ENCODE measurements at regions of chr6 and their contacts with region 1.

Region 1: GRCh38 chr6:30730601-30731435 is 10.7 kb downstream of the TUBB start:
- DNase-seq: peak; percentile 90
- H3K4me3 Mint-ChIP-seq: peak overlapping the region; percentile 35
- H3K27ac Mint-ChIP-seq: peak overlapping the region; percentile 55
- H3K4me1 Mint-ChIP-seq: peaks cover 44% of the 10 kb centered on the region
- H3K27me3 Mint-ChIP-seq: no peaks in the 10 kb centered on the region

Region 2: DNA sequence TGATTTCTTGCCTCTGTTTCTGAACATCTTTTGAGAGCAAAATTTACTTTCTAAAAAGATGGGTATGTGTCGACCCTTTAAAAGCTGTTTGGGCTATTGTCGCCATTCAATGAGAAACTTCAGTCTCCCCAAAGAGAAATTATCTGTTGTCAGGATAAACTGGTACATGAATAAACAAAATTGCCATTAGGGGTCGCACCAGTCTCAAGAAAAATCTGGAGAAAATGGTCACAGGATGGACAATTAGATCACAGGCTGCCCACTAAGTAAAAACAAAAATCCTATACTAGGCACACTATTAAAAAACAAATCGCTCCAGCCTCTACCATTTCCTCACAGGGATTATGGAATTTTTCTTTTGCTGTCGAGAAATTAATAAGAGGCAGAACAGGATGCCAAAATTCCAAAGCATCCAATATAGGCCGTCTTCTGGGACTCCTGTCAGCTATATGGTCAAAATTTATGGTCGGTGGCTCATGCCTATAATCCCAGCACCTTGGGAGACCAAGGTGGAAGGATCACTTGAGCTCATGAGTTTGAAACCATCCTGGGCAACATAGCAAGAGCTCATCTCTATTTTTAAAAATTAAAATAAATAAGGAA is 247.0 kb before region 1 on chr6:
- CTCF ChIA-PET with region 1: interaction called, 13 read pairs
- POLR2A ChIA-PET with region 1: interaction called, 4 read pairs
- DNase-seq: no peak
- H3K4me3 Mint-ChIP-seq: no peak overlapping the region
- H3K27ac Mint-ChIP-seq: no peak overlapping the region
- H3K4me1 Mint-ChIP-seq: peaks cover 35% of the 10 kb centered on the region
- H3K27me3 Mint-ChIP-seq: peaks cover 60% of the 10 kb centered on the region

Region 3: GRCh38 chr6:30600451-30600961 is 130.3 kb before region 1 on chr6:
- CTCF ChIA-PET with region 1: interaction called, 29 read pairs
- POLR2A ChIA-PET with region 1: interaction called, 6 read pairs
- DNase-seq: no peak
- H3K4me3 Mint-ChIP-seq: no peak overlapping the region
- H3K27ac Mint-ChIP-seq: no peak overlapping the region
- H3K4me1 Mint-ChIP-seq: peaks cover 22% of the 10 kb centered on the region
- H3K27me3 Mint-ChIP-seq: no peaks in the 10 kb centered on the region

Region 4: GRCh38 chr6:30646458-30647241 is 84.2 kb before region 1 on chr6 and contains the start of gene C6orf136:
- CTCF ChIA-PET with region 1: interaction called, 11 read pairs
- POLR2A ChIA-PET with region 1: interaction called, 4 read pairs
- DNase-seq: peak; percentile 94
- H3K4me3 Mint-ChIP-seq: peak within 1 kb of the TSS; percentile 83
- H3K27ac Mint-ChIP-seq: peak within 1 kb of the TSS; percentile 90
- H3K4me1 Mint-ChIP-seq: peaks cover 27% of the 10 kb centered on the region
- H3K27me3 Mint-ChIP-seq: no peaks in the 10 kb centered on the region
- total RNA-seq, gene C6orf136: 21.7 to 24.4 TPM

Region 5: DNA sequence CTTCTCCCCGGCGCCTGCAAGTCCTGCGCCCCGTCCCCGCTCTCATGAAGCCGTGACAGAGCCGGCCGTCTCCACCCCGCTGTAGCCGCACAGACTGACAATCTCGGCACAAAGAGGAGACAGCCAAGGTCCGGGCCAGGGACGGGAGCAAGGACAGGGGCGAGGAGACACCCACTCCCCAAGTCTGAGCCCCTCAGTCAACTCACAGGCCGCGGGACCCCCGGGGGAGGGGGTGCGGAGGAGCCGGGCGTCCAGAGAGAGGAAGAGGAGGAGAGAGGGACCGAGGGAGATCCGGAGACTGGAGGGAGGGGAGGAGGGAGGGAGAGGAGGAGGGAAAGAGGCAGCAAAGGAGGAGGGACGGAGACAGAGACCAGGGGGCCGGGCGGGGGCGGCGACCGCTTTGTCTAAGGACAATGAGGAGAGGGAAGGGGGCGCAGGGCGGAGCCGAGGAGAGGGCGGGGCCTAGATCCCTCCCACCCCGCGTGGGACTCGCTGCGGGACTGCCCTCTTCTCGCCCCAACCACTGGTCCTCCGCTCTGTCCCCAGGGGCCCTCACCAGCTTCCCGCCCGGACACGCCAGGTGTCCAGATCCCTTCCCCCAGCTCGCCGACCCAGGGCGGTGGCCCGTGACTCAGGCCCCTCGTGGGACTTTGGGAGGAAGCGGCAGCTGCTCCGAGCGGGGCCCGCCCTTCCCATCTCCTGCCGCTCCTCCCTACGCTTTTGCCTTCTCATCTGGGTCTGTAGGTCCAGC is 43.7 kb before region 1 on chr6:
- CTCF ChIA-PET with region 1: interaction called, 626 read pairs
- POLR2A ChIA-PET with region 1: interaction called, 561 read pairs
- DNase-seq: peak; percentile 85
- H3K4me3 Mint-ChIP-seq: peak overlapping the region; percentile 93
- H3K27ac Mint-ChIP-seq: peak overlapping the region; percentile 94
- H3K4me1 Mint-ChIP-seq: peaks cover 42% of the 10 kb centered on the region
- H3K27me3 Mint-ChIP-seq: no peaks in the 10 kb centered on the region

Region 6: DNA sequence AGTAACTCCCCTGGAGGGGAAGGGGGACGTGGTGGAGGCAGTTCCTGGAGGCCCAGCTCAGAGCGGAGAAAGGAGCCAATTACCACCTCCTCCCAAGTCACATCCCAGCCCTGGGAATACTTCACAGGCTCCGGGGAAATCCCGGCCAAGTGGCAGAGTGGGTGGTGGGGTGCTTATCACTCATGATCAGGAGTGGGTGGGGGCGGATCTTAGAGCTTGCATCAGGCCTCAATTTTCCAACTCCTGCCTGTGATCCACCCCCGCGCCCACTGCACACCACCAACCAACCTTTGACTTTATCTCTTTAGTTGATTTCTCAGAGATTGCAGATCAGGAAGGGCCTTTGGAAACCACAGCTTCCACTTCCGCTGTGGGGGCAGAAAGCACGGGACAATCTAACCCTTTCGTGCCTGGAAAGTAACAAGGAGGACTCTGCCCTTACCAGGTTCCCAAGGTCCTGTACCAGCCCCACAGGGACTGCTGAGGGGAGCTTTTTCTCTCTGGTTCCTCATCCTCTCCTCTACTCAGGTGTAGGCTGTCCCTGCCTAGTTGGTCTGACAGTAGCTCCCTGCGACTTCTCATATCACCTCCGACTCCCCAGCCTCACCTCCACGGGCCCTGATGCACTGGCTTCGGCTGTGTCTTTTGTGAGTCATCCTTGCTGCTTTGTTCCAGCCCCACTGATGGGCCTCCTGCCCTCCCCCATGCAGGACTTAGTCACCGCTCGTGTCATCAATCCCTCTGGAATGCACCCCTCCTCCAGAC is 38.5 kb after region 1 on chr6:
- CTCF ChIA-PET with region 1: interaction called, 4 read pairs
- POLR2A ChIA-PET with region 1: interaction called, 13 read pairs
- DNase-seq: peak; percentile 72
- H3K4me3 Mint-ChIP-seq: peak overlapping the region; percentile 28
- H3K27ac Mint-ChIP-seq: peak overlapping the region; percentile 65
- H3K4me1 Mint-ChIP-seq: peaks cover 52% of the 10 kb centered on the region
- H3K27me3 Mint-ChIP-seq: peaks cover 7% of the 10 kb centered on the region

Measured in activated CD4-positive, alpha-beta memory T cell treated with anti-CD3 and anti-CD28 coated beads, Interleukin-2, amount 10 ng/mL, durations not matched to agents 7 days and 5 days (primary cell).